HepG2 (cell line): ENCODE measurements at regions of chr6 and their contacts with region 1.

Region 1: GRCh38 chr6:28923318-28924102 is at the start of gene TRIM27:
- DNase-seq: peak; percentile 88
- ATAC-seq: peak; percentile 92
- H3K4me3 ChIP-seq: peak within 1 kb of the TSS; percentile 76 to 95 (median 92)
- H3K27ac ChIP-seq: peak within 1 kb of the TSS; percentile 92
- H3K4me1 ChIP-seq: peaks cover 45% of the 10 kb centered on the region
- H3K27me3 ChIP-seq: no peaks in the 10 kb centered on the region; a peak in 1 of 5 replicates
- CTCF ChIP-seq: 0 out of 2 replicates have a peak, but pooled peaks have one; percentile 31
- EP300 ChIP-seq: peak in 1 of 2 experiments; percentile 37; a peak in 1 of 4 replicates
- POLR2A ChIP-seq: peak; percentile 91 to 98
- RAD21 ChIP-seq: peak; percentile 43
- total RNA-seq, gene TRIM27: 79.0 and 88.6 TPM in 2 replicates

Region 2: GRCh38 chr6:28384143-28384533 is 539.4 kb before region 1 on chr6:
- CTCF ChIA-PET with region 1: no interaction called
- POLR2A ChIA-PET with region 1: no interaction called
- in situ Hi-C with region 1: no loop called
- intact Hi-C with region 1: no loop called
- DNase-seq: no peak
- ATAC-seq: no peak
- H3K4me3 ChIP-seq: no peak overlapping the region; a peak in 1 of 6 replicates
- H3K27ac ChIP-seq: peak overlapping the region; percentile 56
- H3K4me1 ChIP-seq: peaks cover 39% of the 10 kb centered on the region
- H3K27me3 ChIP-seq: no peaks in the 10 kb centered on the region
- CTCF ChIP-seq: no peak
- EP300 ChIP-seq: no peak
- POLR2A ChIP-seq: no peak
- RAD21 ChIP-seq: no peak

Region 3: DNA sequence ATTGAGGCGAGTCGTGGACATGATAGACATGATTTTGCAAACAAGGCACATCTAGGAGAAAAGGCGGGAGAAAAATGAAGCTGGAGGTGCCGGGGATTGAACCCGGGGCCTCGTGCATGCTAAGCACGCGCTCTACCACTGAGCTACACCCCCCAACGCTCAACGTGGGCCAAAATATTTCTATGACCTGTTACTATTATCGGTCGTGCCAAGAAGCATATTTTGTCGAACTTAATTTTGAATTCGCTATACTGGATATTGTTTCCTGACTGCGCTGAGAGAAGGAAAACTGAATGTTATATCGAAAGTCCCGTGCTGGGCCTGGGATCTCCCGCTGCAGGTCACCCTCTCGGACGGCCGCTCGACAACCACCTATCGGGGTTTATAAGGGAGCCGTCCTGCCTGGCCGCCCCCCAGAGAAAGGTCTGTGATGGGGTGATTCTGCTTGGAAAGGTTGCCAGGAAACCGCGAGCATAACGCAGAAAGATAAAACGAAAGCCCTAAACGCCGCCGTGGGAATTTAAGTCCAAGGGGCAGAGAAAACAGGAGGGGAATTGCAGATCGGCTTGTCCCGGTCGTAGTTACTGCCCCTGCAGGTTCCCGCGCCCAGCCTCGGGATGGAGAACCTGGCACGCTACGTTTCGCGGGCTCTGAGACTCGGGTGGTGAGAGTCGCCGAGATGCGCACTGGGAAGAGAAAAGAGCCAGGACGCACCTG is 59.7 kb before region 1 on chr6:
- CTCF ChIA-PET with region 1: no interaction called
- POLR2A ChIA-PET with region 1: interaction called, 31 read pairs
- in situ Hi-C with region 1: no loop called
- intact Hi-C with region 1: no loop called
- DNase-seq: peak; percentile 72
- ATAC-seq: peak; percentile 47
- H3K4me3 ChIP-seq: peak overlapping the region; percentile 62 to 78 (median 63)
- H3K27ac ChIP-seq: peak overlapping the region; percentile 56
- H3K4me1 ChIP-seq: peaks cover 39% of the 10 kb centered on the region
- H3K27me3 ChIP-seq: peaks cover 0 to 11% of the 10 kb centered on the region in 2 experiments; a peak in 4 of 5 replicates
- CTCF ChIP-seq: no peak; the same call in 1 of the 2 replicates
- EP300 ChIP-seq: no peak
- POLR2A ChIP-seq: 0 out of 4 replicates have a peak, but pooled peaks of 1 of the 2 experiments have one; percentile 31
- RAD21 ChIP-seq: peak; percentile 14; the same call in 1 of the 2 replicates

Region 4: DNA sequence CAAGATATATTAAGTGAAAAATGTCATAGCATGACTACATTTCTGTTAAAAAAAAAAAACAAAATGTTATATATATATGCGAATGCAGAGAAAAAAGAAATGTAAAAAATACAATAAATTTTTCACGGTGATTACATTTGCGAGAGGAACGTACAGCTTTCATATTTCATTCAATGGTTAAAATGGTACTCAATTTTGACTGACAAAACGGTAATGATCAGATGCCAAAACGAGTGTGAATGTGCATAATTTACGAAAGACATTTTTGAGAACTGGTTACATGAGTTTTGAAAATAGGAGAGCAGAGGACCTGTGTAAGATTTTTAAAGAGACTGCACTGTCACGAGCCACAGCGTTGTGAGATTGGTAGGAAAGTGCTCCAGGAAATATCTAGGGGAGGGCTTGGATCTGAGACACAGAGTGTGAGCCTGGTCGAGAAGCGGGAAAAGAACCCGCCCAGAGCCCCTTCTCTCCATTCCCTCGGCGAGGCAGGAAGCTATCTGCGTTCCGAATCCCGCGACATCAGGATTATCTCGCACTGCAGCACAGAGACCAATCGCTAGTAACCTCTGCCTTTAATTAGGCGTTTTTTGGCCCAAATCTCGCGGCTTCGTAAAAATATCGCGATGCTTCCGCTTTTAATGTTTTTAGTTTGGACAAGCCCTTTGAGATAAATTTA is 28.2 kb before region 1 on chr6:
- CTCF ChIA-PET with region 1: no interaction called
- POLR2A ChIA-PET with region 1: interaction called, 120 read pairs
- in situ Hi-C with region 1: no loop called
- intact Hi-C with region 1: loop called (anchors 1 kb)
- DNase-seq: peak; percentile 98
- ATAC-seq: peak; percentile 86
- H3K4me3 ChIP-seq: peak overlapping the region; percentile 82 to 97 (median 86)
- H3K27ac ChIP-seq: peak overlapping the region; percentile 93
- H3K4me1 ChIP-seq: peaks cover 40% of the 10 kb centered on the region
- H3K27me3 ChIP-seq: no peaks in the 10 kb centered on the region; a peak in 1 of 5 replicates
- CTCF ChIP-seq: no peak
- EP300 ChIP-seq: no peak
- POLR2A ChIP-seq: peak; percentile 90 to 95
- RAD21 ChIP-seq: no peak

Region 5: GRCh38 chr6:28940858-28941680 is 17.6 kb after region 1 on chr6:
- CTCF ChIA-PET with region 1: no interaction called
- POLR2A ChIA-PET with region 1: interaction called, 82 read pairs
- in situ Hi-C with region 1: no loop called
- intact Hi-C with region 1: loop called (anchors 1 kb)
- DNase-seq: peak; percentile 89
- ATAC-seq: peak; percentile 73
- H3K4me3 ChIP-seq: peak overlapping the region; percentile 68 to 85 (median 79)
- H3K27ac ChIP-seq: peak overlapping the region; percentile 63
- H3K4me1 ChIP-seq: peaks cover 44% of the 10 kb centered on the region
- H3K27me3 ChIP-seq: peaks cover 0 to 7% of the 10 kb centered on the region in 2 experiments; a peak in 1 of 5 replicates
- CTCF ChIP-seq: peak; percentile 13
- EP300 ChIP-seq: no peak
- POLR2A ChIP-seq: no peak
- RAD21 ChIP-seq: no peak

Region 6: DNA sequence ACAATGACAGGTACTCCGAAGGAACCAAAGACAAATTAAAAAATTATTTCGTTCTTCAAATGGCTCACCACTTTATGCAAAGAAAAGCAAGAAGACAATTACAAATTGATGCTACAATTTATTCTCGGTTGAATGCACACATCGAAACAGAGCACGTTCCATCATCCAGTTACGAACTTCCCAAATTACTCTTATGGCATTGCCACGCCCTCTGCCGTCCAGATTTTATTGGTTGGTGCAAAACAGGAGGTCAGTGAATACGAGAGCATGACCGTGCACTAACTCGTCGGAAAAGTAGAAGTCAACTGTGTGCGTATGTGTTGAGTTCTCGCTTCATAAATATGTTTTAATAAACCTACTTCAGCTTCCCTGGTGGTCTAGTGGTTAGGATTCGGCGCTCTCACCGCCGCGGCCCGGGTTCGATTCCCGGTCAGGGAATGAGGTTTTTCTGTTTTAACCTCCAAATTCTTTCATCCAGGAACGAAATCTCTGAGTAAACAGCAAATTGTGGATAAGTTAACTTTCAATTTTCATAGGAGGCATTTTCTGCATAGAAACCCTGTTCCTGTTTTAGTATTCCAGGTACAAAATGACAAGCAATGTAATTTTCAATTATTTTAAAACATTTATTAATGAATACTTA is 58.4 kb after region 1 on chr6:
- CTCF ChIA-PET with region 1: no interaction called
- POLR2A ChIA-PET with region 1: interaction called, 79 read pairs
- in situ Hi-C with region 1: no loop called
- intact Hi-C with region 1: loop called (anchors 1 kb)
- DNase-seq: peak; percentile 98
- ATAC-seq: peak; percentile 26
- H3K4me3 ChIP-seq: peak overlapping the region; percentile 71 to 97 (median 83)
- H3K27ac ChIP-seq: peak overlapping the region; percentile 98
- H3K4me1 ChIP-seq: peaks cover 62% of the 10 kb centered on the region
- H3K27me3 ChIP-seq: no peaks in the 10 kb centered on the region; a peak in 2 of 5 replicates
- CTCF ChIP-seq: peak; percentile 63
- EP300 ChIP-seq: 0 out of 4 replicates have a peak, but pooled peaks of 1 of the 2 experiments have one; percentile 13
- POLR2A ChIP-seq: no peak
- RAD21 ChIP-seq: peak; percentile 27; the same call in 1 of the 2 replicates